ENCODE measurements at regions of chr19 and their contacts with region 1.

Region 1: GRCh38 chr19:36973021-36973843 is 57.1 kb downstream of the ZNF568 start:
- DNase-seq: peak; percentile 91
- H3K4me3 Mint-ChIP-seq: peak overlapping the region; percentile 89
- H3K27ac Mint-ChIP-seq: peak overlapping the region; percentile 95
- H3K4me1 Mint-ChIP-seq: peaks cover 7% of the 10 kb centered on the region
- H3K27me3 Mint-ChIP-seq: no peaks in the 10 kb centered on the region

Region 2: DNA sequence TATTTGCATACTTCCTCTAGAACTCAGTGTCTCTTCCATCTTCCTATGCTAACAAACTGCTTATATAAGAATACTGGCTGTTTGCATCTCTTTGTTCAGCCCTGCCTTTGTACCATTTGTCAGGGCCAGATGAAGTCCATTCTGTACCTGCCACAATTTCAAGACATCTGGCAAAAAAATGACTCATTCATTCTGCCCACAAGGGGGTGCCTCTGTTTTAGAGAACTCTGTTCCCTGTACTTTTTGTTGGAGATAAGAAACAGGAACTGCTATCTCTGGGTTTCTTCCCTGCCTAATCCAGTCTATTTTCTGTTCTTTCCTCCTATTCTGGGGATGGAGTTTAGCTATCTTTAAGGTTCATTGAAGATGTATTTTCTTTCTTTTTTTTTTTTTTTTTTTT is 34.1 kb before region 1 on chr19:
- CTCF ChIA-PET with region 1: no interaction called
- POLR2A ChIA-PET with region 1: no interaction called
- intact Hi-C with region 1: no loop called
- DNase-seq: no peak
- H3K4me3 Mint-ChIP-seq: no peak overlapping the region
- H3K27ac Mint-ChIP-seq: no peak overlapping the region
- H3K4me1 Mint-ChIP-seq: no peaks in the 10 kb centered on the region
- H3K27me3 Mint-ChIP-seq: no peaks in the 10 kb centered on the region

Region 3: GRCh38 chr19:36986601-36987000 is 13.4 kb after region 1 on chr19:
- CTCF ChIA-PET with region 1: no interaction called
- POLR2A ChIA-PET with region 1: no interaction called
- intact Hi-C with region 1: no loop called
- DNase-seq: no peak
- H3K4me3 Mint-ChIP-seq: no peak overlapping the region
- H3K27ac Mint-ChIP-seq: no peak overlapping the region
- H3K4me1 Mint-ChIP-seq: no peaks in the 10 kb centered on the region
- H3K27me3 Mint-ChIP-seq: no peaks in the 10 kb centered on the region

Region 4: GRCh38 chr19:37077934-37078725 is 104.9 kb after region 1 on chr19 and contains the start of gene ZNF420:
- CTCF ChIA-PET with region 1: no interaction called
- POLR2A ChIA-PET with region 1: no interaction called
- intact Hi-C with region 1: loop called (anchors 2 kb)
- DNase-seq: peak; percentile 93
- H3K4me3 Mint-ChIP-seq: peak within 1 kb of the TSS; percentile 94
- H3K27ac Mint-ChIP-seq: peak within 1 kb of the TSS; percentile 79
- H3K4me1 Mint-ChIP-seq: peaks cover 31% of the 10 kb centered on the region
- H3K27me3 Mint-ChIP-seq: no peaks in the 10 kb centered on the region
- total RNA-seq, gene ZNF420: 6.5 to 8.7 TPM

Region 5: GRCh38 chr19:37227996-37228395 is 254.8 kb after region 1 on chr19:
- CTCF ChIA-PET with region 1: no interaction called
- POLR2A ChIA-PET with region 1: no interaction called
- intact Hi-C with region 1: loop called (anchors 2 kb)
- DNase-seq: peak; percentile 52
- H3K4me3 Mint-ChIP-seq: no peak overlapping the region
- H3K27ac Mint-ChIP-seq: no peak overlapping the region
- H3K4me1 Mint-ChIP-seq: no peaks in the 10 kb centered on the region
- H3K27me3 Mint-ChIP-seq: no peaks in the 10 kb centered on the region